CD14-positive monocyte (primary cell): ENCODE measurements at regions of chr2 and their contacts with region 1.

Region 1: DNA sequence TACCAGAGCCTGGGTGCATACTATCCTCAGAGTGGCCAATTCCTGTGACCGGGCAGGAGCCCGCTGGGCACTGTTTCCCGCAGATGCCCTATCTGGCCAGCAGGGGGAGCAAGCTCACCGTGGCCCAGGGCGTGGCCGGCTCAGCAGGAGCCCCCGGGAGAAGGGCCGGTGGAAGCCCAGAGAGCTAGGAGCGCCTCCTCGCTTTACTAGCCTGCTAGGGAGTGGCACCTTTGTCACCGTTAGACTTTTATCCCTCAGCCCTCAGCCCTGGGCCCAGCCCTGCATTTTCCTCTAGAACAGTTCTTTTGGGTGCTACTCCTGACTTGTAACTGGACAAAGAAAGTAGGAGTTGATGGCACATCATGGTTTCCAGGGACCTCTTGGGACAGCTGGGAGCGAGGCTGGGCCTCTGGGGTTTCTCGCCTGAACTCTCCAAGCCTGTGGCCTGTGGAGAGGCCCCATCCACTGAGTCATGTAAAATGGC is 24.0 kb downstream of the TMEM177 start:
- DNase-seq: peak; percentile 48 to 61 (median 55)
- H3K4me3 ChIP-seq: no peak overlapping the region
- H3K4me3 Mint-ChIP-seq: no peak overlapping the region
- H3K27ac ChIP-seq: no peak overlapping the region
- H3K27ac Mint-ChIP-seq: no peak overlapping the region
- H3K4me1 ChIP-seq: peaks cover 0 to 3% of the 10 kb centered on the region in 2 donors
- H3K4me1 Mint-ChIP-seq: peaks cover 4% of the 10 kb centered on the region
- H3K27me3 ChIP-seq: no peaks in the 10 kb centered on the region
- H3K27me3 Mint-ChIP-seq: peaks cover 0 to 11% (median 7%) of the 10 kb centered on the region in 3 donors
- CTCF ChIP-seq: peak; percentile 91

Region 2: DNA sequence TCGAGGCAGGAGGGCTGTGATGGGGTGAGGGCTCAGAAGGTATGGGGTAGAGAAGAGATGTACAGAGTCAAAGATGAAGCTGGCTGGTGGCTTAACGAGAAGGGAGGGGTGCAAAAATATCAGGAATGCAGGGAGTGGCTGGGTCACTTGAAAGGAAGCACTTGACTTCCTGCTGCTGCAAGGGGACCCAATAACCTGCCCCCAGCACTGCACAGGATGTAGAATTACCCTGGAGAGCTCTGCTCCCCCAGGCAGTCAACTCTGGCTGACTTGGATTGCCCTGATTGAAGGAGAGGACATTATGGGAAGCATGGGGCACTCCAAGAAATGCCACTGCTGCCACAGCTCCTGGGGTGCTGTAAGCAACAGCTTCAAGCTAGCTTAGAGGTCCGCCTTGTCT is 116.9 kb before region 1 on chr2:
- intact Hi-C with region 1: no loop called
- DNase-seq: no peak
- H3K4me3 ChIP-seq: no peak overlapping the region
- H3K4me3 Mint-ChIP-seq: no peak overlapping the region
- H3K27ac ChIP-seq: no peak overlapping the region
- H3K27ac Mint-ChIP-seq: peak overlapping the region in 1 of 7 donors; percentile 66
- H3K4me1 ChIP-seq: no peaks in the 10 kb centered on the region
- H3K4me1 Mint-ChIP-seq: no peaks in the 10 kb centered on the region
- H3K27me3 ChIP-seq: no peaks in the 10 kb centered on the region
- H3K27me3 Mint-ChIP-seq: peaks cover 1 to 6% (median 3%) of the 10 kb centered on the region in 3 donors
- CTCF ChIP-seq: no peak

Region 3: GRCh38 chr2:119659601-119660342 is 43.2 kb before region 1 on chr2:
- intact Hi-C with region 1: no loop called
- DNase-seq: peak; percentile 27 to 60 (median 52)
- H3K4me3 ChIP-seq: no peak overlapping the region
- H3K4me3 Mint-ChIP-seq: no peak overlapping the region
- H3K27ac ChIP-seq: no peak overlapping the region
- H3K27ac Mint-ChIP-seq: no peak overlapping the region
- H3K4me1 ChIP-seq: peaks cover 16% of the 10 kb centered on the region in 2 donors
- H3K4me1 Mint-ChIP-seq: peaks cover 32% of the 10 kb centered on the region
- H3K27me3 ChIP-seq: no peaks in the 10 kb centered on the region
- H3K27me3 Mint-ChIP-seq: peaks cover 1 to 3% (median 2%) of the 10 kb centered on the region in 3 donors
- CTCF ChIP-seq: peak; percentile 88

Region 4: GRCh38 chr2:119826370-119826961 is 123.5 kb after region 1 on chr2:
- intact Hi-C with region 1: loop called (anchors 5 kb)
- DNase-seq: peak; percentile 3 to 38 (median 31)
- H3K4me3 ChIP-seq: no peak overlapping the region
- H3K4me3 Mint-ChIP-seq: no peak overlapping the region
- H3K27ac ChIP-seq: no peak overlapping the region
- H3K27ac Mint-ChIP-seq: no peak overlapping the region
- H3K4me1 ChIP-seq: no peaks in the 10 kb centered on the region
- H3K4me1 Mint-ChIP-seq: no peaks in the 10 kb centered on the region
- H3K27me3 ChIP-seq: no peaks in the 10 kb centered on the region
- H3K27me3 Mint-ChIP-seq: peaks cover 0 to 1% (median 0%) of the 10 kb centered on the region in 3 donors
- CTCF ChIP-seq: peak; percentile 69

Region 5: GRCh38 chr2:119921825-119922224 is 218.9 kb after region 1 on chr2:
- intact Hi-C with region 1: no loop called
- DNase-seq: no peak
- H3K4me3 ChIP-seq: no peak overlapping the region
- H3K4me3 Mint-ChIP-seq: no peak overlapping the region
- H3K27ac ChIP-seq: no peak overlapping the region
- H3K27ac Mint-ChIP-seq: no peak overlapping the region
- H3K4me1 ChIP-seq: no peaks in the 10 kb centered on the region
- H3K4me1 Mint-ChIP-seq: no peaks in the 10 kb centered on the region
- H3K27me3 ChIP-seq: no peaks in the 10 kb centered on the region
- H3K27me3 Mint-ChIP-seq: no peaks in the 10 kb centered on the region
- CTCF ChIP-seq: no peak

Region 6: GRCh38 chr2:120174963-120175581 is 472.1 kb after region 1 on chr2:
- intact Hi-C with region 1: loop called (anchors 5 to 10 kb)
- DNase-seq: peak; percentile 31 to 64 (median 57)
- H3K4me3 ChIP-seq: no peak overlapping the region
- H3K4me3 Mint-ChIP-seq: no peak overlapping the region
- H3K27ac ChIP-seq: no peak overlapping the region
- H3K27ac Mint-ChIP-seq: no peak overlapping the region
- H3K4me1 ChIP-seq: peaks cover 18 to 19% of the 10 kb centered on the region in 2 donors
- H3K4me1 Mint-ChIP-seq: peaks cover 22% of the 10 kb centered on the region
- H3K27me3 ChIP-seq: no peaks in the 10 kb centered on the region
- H3K27me3 Mint-ChIP-seq: peaks cover 4 to 11% (median 4%) of the 10 kb centered on the region in 3 donors
- CTCF ChIP-seq: peak; percentile 84

Region 7: GRCh38 chr2:120312861-120313694 is 610.1 kb after region 1 on chr2:
- intact Hi-C with region 1: loop called (anchors 5 to 10 kb)
- DNase-seq: peak; percentile 54 to 61 (median 54)
- H3K4me3 ChIP-seq: peak overlapping the region; percentile 3 to 66 (median 10)
- H3K4me3 Mint-ChIP-seq: peak overlapping the region; percentile 70 to 90
- H3K27ac ChIP-seq: no peak overlapping the region
- H3K27ac Mint-ChIP-seq: peak overlapping the region in 1 of 7 donors; percentile 64
- H3K4me1 ChIP-seq: peaks cover 6 to 9% of the 10 kb centered on the region in 2 donors
- H3K4me1 Mint-ChIP-seq: peaks cover 17% of the 10 kb centered on the region
- H3K27me3 ChIP-seq: peaks cover 0 to 8% of the 10 kb centered on the region in 2 donors
- H3K27me3 Mint-ChIP-seq: peaks cover 19 to 28% (median 21%) of the 10 kb centered on the region in 3 donors
- CTCF ChIP-seq: peak; percentile 94

Region 8: GRCh38 chr2:120680136-120680761 is 977.3 kb after region 1 on chr2:
- intact Hi-C with region 1: loop called (anchors 5 to 10 kb)
- DNase-seq: peak; percentile 50 to 64 (median 63)
- H3K4me3 ChIP-seq: no peak overlapping the region
- H3K4me3 Mint-ChIP-seq: no peak overlapping the region
- H3K27ac ChIP-seq: no peak overlapping the region
- H3K27ac Mint-ChIP-seq: no peak overlapping the region
- H3K4me1 ChIP-seq: no peaks in the 10 kb centered on the region
- H3K4me1 Mint-ChIP-seq: no peaks in the 10 kb centered on the region
- H3K27me3 ChIP-seq: peaks cover 0 to 4% of the 10 kb centered on the region in 2 donors
- H3K27me3 Mint-ChIP-seq: peaks cover 3 to 33% (median 6%) of the 10 kb centered on the region in 3 donors
- CTCF ChIP-seq: peak; percentile 55